GM12878 (cell line): ENCODE measurements at regions of chr3 and their contacts with region 1.

Region 1: GRCh38 chr3:107235928-107236315 is 141.3 kb upstream of the CCDC54 start:
- DNase-seq: peak; percentile 31
- ATAC-seq: peak; percentile 70
- H3K4me3 ChIP-seq: no peak overlapping the region
- H3K27ac ChIP-seq: no peak overlapping the region
- H3K4me1 ChIP-seq: no peaks in the 10 kb centered on the region; the same call in 1 of the 2 replicates
- H3K27me3 ChIP-seq: no peaks in the 10 kb centered on the region
- CTCF ChIP-seq: peak; percentile 69 to 90 (median 84)
- EP300 ChIP-seq: no peak
- POLR2A ChIP-seq: no peak
- RAD21 ChIP-seq: peak; percentile 98

Region 2: GRCh38 chr3:107271787-107272387 is 36.0 kb after region 1 on chr3:
- CTCF ChIA-PET with region 1: interaction called, 11 read pairs
- POLR2A ChIA-PET with region 1: no interaction called
- RAD21 ChIA-PET with region 1: interaction called, 5 read pairs
- SMC1A ChIA-PET with region 1: interaction called, 4 read pairs
- in situ Hi-C with region 1: no loop called
- intact Hi-C with region 1: no loop called
- DNase-seq: no peak
- ATAC-seq: peak; percentile 74
- H3K4me3 ChIP-seq: no peak overlapping the region
- H3K27ac ChIP-seq: no peak overlapping the region
- H3K4me1 ChIP-seq: no peaks in the 10 kb centered on the region
- H3K27me3 ChIP-seq: no peaks in the 10 kb centered on the region; a peak in 1 of 4 replicates
- CTCF ChIP-seq: peak; percentile 46 to 62 (median 53); a peak in 5 of 6 replicates
- EP300 ChIP-seq: no peak
- POLR2A ChIP-seq: no peak
- RAD21 ChIP-seq: peak; percentile 77

Region 3: DNA sequence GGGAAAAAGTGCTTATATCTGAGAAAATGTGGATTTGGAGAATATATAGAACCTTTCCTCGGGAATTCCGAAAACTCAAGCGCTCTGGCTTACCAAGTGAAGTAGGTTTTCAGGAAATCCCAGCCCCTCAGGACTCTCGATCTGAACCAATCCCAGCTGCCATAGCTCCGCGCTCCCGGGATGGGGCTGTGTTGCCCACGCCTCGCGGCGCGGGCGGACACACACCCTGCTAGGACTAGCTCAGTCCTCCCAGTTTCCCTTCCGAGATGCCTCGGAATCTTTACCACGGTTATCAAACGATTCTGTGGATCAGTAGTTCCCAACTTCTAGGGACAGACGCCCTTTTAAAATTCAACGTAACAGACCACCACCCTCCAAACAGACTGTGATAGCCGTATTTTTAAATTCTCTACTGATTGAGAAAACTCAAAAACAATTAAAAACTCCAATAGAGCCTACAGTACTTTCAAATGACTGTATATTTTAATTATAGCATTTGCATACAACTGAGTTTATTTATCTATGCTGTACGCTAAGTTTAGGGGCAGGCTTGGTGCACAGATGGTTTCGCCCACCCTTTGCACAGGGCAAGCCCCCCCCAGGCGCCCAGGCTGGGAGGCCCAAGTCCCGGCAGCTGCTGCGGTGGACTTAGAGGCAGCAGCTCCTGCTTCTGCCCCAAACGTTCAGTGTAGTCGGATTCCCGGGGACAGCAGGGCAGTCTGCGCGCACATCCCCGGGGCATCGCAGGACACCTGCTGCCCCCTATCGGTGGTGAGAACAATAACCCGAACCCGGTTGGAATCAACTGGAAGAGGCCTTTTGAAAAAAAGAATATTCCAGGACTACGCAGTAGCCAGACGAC is 193.6 kb after region 1 on chr3:
- CTCF ChIA-PET with region 1: interaction called, 9 read pairs
- POLR2A ChIA-PET with region 1: no interaction called
- RAD21 ChIA-PET with region 1: no interaction called
- SMC1A ChIA-PET with region 1: interaction called, 8 read pairs
- in situ Hi-C with region 1: loop called (anchors 5 kb)
- intact Hi-C with region 1: loop called (anchors 2 kb)
- DNase-seq: no peak
- ATAC-seq: peak; percentile 78
- H3K4me3 ChIP-seq: no peak overlapping the region
- H3K27ac ChIP-seq: no peak overlapping the region
- H3K4me1 ChIP-seq: no peaks in the 10 kb centered on the region; the same call in 1 of the 2 replicates
- H3K27me3 ChIP-seq: peaks cover 0 to 3% of the 10 kb centered on the region in 2 experiments; a peak in 3 of 4 replicates
- CTCF ChIP-seq: peak; percentile 70 to 85 (median 78)
- EP300 ChIP-seq: no peak
- POLR2A ChIP-seq: no peak
- RAD21 ChIP-seq: peak; percentile 57

Region 4: GRCh38 chr3:107543666-107544065 is 307.7 kb after region 1 on chr3:
- CTCF ChIA-PET with region 1: interaction called, 6 read pairs
- POLR2A ChIA-PET with region 1: no interaction called
- RAD21 ChIA-PET with region 1: no interaction called
- SMC1A ChIA-PET with region 1: interaction called, 3 read pairs
- in situ Hi-C with region 1: no loop called
- intact Hi-C with region 1: loop called (anchors 2 kb)
- DNase-seq: no peak
- ATAC-seq: peak; percentile 50; the same call in 2 of the 3 replicates
- H3K4me3 ChIP-seq: no peak overlapping the region
- H3K27ac ChIP-seq: no peak overlapping the region
- H3K4me1 ChIP-seq: no peaks in the 10 kb centered on the region
- H3K27me3 ChIP-seq: no peaks in the 10 kb centered on the region
- CTCF ChIP-seq: peak in 2 of 3 experiments; percentile 15 to 25; a peak in 3 of 6 replicates
- EP300 ChIP-seq: no peak
- POLR2A ChIP-seq: no peak
- RAD21 ChIP-seq: peak; percentile 47

Region 5: DNA sequence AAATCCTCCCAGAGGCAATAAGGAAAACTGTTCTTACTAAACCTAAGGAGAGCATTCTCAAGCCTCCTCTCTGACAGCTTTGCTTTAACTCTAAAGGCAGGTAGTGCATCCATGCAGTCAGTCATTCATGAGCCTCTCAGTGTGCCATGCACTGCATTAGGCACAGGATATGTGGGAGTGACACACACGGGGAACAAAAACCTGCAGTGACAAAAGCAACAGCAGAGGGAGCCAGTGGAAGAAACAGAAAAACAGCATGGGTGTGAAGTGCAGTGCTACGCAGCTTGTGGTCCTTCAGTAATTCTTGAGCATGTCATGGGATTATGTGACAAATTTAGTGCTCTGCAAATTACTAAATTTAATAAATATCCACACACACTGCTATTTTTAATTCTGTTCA is 517.6 kb after region 1 on chr3:
- CTCF ChIA-PET with region 1: interaction called, 7 read pairs
- POLR2A ChIA-PET with region 1: no interaction called
- RAD21 ChIA-PET with region 1: no interaction called
- SMC1A ChIA-PET with region 1: no interaction called
- in situ Hi-C with region 1: loop called (anchors 10 kb)
- intact Hi-C with region 1: no loop called
- DNase-seq: no peak
- ATAC-seq: peak; percentile 70
- H3K4me3 ChIP-seq: no peak overlapping the region
- H3K27ac ChIP-seq: no peak overlapping the region
- H3K4me1 ChIP-seq: no peaks in the 10 kb centered on the region
- H3K27me3 ChIP-seq: no peaks in the 10 kb centered on the region
- CTCF ChIP-seq: peak; percentile 41 to 45 (median 44); a peak in 5 of 6 replicates
- EP300 ChIP-seq: no peak
- POLR2A ChIP-seq: no peak
- RAD21 ChIP-seq: peak; percentile 36; the same call in 1 of the 2 replicates

Region 6: DNA sequence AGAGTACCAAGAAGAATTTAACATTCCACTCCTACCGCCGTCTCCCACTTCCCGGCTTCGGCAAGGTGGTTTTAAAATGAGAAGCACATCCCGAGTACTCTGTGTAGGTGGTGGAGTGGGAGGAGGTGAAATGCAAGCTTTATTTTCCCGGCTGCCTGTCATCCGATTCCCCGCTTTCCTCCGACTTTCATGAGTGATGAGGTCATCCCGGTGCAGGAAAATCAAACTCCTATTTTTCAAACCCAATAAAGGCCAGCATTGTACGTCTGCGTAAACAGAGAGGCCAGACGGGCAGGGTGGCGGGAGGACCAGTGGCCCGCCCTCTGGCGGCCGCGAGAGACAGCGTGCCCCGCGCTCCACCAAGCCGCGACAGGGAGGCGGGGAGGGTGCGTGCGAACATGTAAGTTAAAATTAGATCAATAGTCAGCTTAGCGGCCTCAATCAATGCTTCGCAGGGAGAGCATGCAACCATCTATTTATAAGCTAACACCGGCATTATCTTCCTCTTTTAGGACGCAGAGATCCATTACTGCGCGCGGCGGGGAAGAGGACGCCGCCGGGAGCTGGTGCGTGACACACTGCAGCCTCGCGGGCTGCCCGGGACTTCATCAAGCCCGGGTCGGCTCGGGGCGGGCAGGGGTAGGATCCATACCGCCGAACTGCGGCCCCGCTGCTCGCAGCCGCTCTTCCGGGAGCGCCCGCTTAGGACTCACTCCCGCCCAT is 691.6 kb after region 1 on chr3:
- CTCF ChIA-PET with region 1: interaction called, 3 read pairs
- POLR2A ChIA-PET with region 1: no interaction called
- RAD21 ChIA-PET with region 1: no interaction called
- SMC1A ChIA-PET with region 1: interaction called, 3 read pairs
- in situ Hi-C with region 1: loop called (anchors 10 kb)
- intact Hi-C with region 1: loop called (anchors 5 kb)
- DNase-seq: no peak
- ATAC-seq: peak; percentile 99
- H3K4me3 ChIP-seq: peak overlapping the region; percentile 57; the same call in 1 of the 2 replicates
- H3K27ac ChIP-seq: no peak overlapping the region
- H3K4me1 ChIP-seq: peaks cover 3% of the 10 kb centered on the region; the same call in 1 of the 2 replicates
- H3K27me3 ChIP-seq: peaks cover 0 to 5% of the 10 kb centered on the region in 2 experiments; a peak in 3 of 4 replicates
- CTCF ChIP-seq: peak; percentile 77 to 93 (median 91)
- EP300 ChIP-seq: no peak
- POLR2A ChIP-seq: no peak
- RAD21 ChIP-seq: peak; percentile 60